ENCODE measurements at regions of chr15 and their contacts with region 1.

Region 1: DNA sequence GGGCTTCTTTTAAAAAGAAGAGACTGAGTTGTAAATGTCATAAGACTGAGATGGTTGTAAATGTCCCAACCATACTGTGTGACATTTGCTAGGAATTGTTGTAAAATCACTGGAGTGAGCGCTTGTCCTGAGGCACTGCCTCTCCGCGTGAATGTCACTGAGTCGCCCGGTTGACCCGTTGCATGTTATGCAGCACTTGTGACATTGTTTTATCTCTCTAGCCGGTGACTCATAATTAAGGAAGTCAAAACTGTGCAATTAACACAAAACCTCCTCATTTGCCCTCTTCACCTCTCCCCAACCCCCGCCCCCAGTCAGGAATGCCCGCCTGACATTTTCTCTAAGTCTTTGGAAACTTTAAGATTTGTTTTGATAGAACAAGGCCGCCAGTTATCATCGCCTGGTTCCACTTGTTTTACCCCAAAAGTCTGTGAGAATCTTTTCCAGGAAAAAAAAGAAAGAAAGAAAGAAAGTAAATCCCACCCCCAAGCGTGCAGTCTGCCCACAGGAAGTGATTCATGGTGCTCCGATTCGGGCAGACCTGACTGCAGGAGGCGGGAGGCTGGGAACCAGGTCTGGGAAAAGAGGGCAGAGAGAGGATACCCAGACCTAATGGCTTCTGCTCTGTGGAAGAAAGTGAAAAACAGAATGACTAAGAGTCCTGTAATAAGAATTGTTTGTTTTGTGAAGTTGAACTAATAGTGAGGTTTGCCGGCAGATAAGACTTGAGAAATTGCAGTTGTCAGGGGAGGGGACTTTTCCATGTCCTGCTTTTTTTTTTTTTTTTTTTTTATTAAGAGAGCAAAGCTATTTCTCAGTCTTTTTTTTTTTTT is 84.8 kb downstream of the SMAD3 start:
- H3K4me3 Mint-ChIP-seq: peak overlapping the region; percentile 44
- H3K27ac Mint-ChIP-seq: peak overlapping the region; percentile 48
- H3K4me1 Mint-ChIP-seq: peaks cover 46% of the 10 kb centered on the region
- H3K27me3 Mint-ChIP-seq: peaks cover 15% of the 10 kb centered on the region

Region 2: GRCh38 chr15:67091071-67091979 is 58.9 kb before region 1 on chr15:
- intact Hi-C with region 1: loop called (anchors 10 kb)
- H3K4me3 Mint-ChIP-seq: no peak overlapping the region
- H3K27ac Mint-ChIP-seq: peak overlapping the region; percentile 76
- H3K4me1 Mint-ChIP-seq: peaks cover 79% of the 10 kb centered on the region
- H3K27me3 Mint-ChIP-seq: peaks cover 34% of the 10 kb centered on the region

Region 3: GRCh38 chr15:67109141-67110034 is 40.9 kb before region 1 on chr15:
- intact Hi-C with region 1: loop called (anchors 5 kb)
- H3K4me3 Mint-ChIP-seq: no peak overlapping the region
- H3K27ac Mint-ChIP-seq: peak overlapping the region; percentile 23
- H3K4me1 Mint-ChIP-seq: peaks cover 61% of the 10 kb centered on the region
- H3K27me3 Mint-ChIP-seq: peaks cover 32% of the 10 kb centered on the region

Measured in dendritic cell treated with granulocyte-macrophage colony-stimulating factor and Interleukin-4, amounts not matched to agents 40 ng/mL and 50 ng/mL, for 4 days (primary cell).